ENCODE measurements at regions of chr2 and their contacts with region 1.

Region 1: GRCh38 chr2:128458505-128458904 is 139.8 kb upstream of the HS6ST1 start:
- DNase-seq: no peak
- H3K4me3 Mint-ChIP-seq: no peak overlapping the region
- H3K27ac Mint-ChIP-seq: peak overlapping the region; percentile 2
- H3K4me1 Mint-ChIP-seq: peaks cover 21% of the 10 kb centered on the region
- H3K27me3 Mint-ChIP-seq: peaks cover 10% of the 10 kb centered on the region
- CTCF ChIP-seq: no peak

Region 2: GRCh38 chr2:128292599-128293425 is 165.7 kb before region 1 on chr2:
- CTCF ChIA-PET with region 1: no interaction called
- intact Hi-C with region 1: no loop called
- DNase-seq: no peak
- H3K4me3 Mint-ChIP-seq: no peak overlapping the region
- H3K27ac Mint-ChIP-seq: no peak overlapping the region
- H3K4me1 Mint-ChIP-seq: no peaks in the 10 kb centered on the region
- H3K27me3 Mint-ChIP-seq: no peaks in the 10 kb centered on the region
- CTCF ChIP-seq: no peak

Region 3: DNA sequence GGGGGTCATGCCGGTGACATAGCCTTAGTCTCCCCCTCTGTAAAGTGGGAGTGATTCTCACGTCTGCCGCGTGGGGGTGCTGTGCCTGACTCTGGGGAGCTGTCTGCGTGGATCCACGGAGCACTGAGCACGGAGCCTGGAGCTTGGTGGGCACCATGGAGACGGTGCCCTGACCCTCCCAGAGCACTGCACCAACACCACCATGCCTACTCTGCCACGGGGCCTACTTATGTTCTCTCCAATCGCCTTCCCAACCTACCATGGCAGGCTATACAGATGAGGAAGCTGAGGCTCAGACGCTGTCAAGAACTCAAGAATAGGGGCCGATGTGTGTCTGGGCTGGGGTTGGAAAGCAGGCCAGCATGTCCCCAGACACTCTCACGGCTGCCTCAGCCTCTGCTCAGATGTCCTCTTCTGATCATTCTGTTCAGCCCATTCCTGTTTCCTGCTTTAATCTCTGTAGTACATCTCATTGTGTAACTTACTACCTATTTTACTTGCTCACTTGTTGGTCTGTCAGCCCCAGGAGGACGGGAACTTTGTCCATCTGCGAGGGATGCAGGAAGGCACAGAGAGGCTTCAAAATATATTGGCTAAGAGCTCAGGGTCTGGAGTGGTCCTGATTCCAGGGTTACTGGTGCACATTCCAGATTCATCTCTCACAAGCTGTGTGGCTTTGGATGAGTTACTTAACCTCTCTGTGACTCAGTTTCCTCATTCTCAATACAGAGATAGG is 28.3 kb after region 1 on chr2:
- CTCF ChIA-PET with region 1: interaction called, 3 read pairs
- intact Hi-C with region 1: loop called (anchors 2 kb)
- DNase-seq: no peak
- H3K4me3 Mint-ChIP-seq: no peak overlapping the region
- H3K27ac Mint-ChIP-seq: no peak overlapping the region
- H3K4me1 Mint-ChIP-seq: peaks cover 48% of the 10 kb centered on the region
- H3K27me3 Mint-ChIP-seq: no peaks in the 10 kb centered on the region
- CTCF ChIP-seq: no peak

Region 4: DNA sequence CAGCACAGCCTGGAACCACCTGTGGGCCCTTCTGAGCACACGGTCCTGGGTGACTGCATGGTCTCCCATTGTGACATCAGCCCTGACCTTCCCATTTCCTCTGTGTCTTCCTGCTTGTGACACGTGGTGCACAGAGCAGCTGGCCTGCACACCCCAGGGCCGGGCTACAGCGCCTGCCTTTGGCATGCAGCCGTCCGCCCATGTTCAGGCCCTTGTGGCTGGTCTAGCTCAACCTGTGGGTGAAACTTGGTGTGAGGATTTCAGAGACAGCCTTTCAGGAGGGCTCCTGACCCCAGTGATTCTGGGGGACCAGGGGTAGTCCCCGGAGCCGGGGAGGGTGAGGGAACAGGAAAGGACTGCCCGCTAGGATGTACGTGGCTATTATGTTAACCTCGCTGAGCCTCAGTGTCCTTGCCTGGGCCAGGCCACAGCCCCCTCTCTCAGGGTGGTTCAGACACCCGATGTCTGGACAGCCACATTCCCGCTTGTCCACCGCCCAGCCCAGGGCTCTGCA is 145.0 kb after region 1 on chr2:
- CTCF ChIA-PET with region 1: no interaction called
- intact Hi-C with region 1: no loop called
- DNase-seq: no peak
- H3K4me3 Mint-ChIP-seq: no peak overlapping the region
- H3K27ac Mint-ChIP-seq: no peak overlapping the region
- H3K4me1 Mint-ChIP-seq: no peaks in the 10 kb centered on the region
- H3K27me3 Mint-ChIP-seq: no peaks in the 10 kb centered on the region
- CTCF ChIP-seq: no peak

Measured in Calu3 (cell line).